Aorta (tissue), 5 donors: ENCODE measurements at regions of chrX and their contacts with region 1.

Region 1: DNA sequence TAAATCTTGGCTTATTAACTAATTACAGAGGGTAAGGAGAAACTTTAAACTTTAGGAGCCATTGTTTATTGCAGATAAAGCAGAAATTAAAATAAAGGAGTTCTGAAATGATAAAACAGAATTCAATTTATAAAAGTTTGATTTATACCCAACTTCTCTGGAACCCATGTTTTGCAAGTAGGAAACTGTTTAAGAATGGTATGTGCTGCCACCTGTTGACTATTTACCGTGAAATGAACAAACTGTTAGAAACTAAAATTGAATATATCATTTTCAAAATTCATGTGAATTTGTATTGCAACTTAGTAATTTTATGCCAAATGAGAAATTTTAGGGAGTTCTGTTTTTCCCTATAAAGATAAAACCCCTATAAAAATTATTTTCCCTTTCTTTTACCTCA is 11.0 kb upstream of the TBC1D8B start:
- DNase-seq: no peak
- ATAC-seq: no peak
- H3K4me3 ChIP-seq: no peak overlapping the region
- H3K27ac ChIP-seq: no peak overlapping the region
- H3K4me1 ChIP-seq: no peaks in the 10 kb centered on the region
- H3K27me3 ChIP-seq: no peaks in the 10 kb centered on the region

Region 2: DNA sequence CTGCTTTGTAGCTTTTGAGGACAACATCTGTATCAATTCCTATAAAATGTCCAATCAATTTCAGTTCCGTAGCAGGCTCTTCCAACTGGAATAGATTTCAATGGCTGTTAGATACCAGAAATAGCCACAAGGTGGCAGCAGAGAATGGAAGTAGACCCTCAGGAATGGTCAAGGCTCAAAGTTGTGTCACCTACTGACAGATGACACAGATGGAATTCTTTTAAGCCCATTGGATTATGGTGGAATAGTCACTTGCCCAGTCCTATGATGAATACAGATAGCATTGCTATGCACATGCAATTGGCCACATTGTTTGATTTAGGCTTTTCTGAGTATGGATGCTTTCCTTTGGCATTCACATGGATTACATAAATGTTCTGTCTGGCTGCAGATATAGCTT is 310.2 kb before region 1 on chrX:
- intact Hi-C with region 1: loop called in 1 of 2 experiments (anchors 5 kb)
- DNase-seq: no peak
- ATAC-seq: peak; percentile 69
- H3K4me3 ChIP-seq: no peak overlapping the region
- H3K27ac ChIP-seq: no peak overlapping the region
- H3K4me1 ChIP-seq: no peaks in the 10 kb centered on the region
- H3K27me3 ChIP-seq: no peaks in the 10 kb centered on the region